ENCODE measurements at regions of chr9 and their contacts with region 1.

Region 1: DNA sequence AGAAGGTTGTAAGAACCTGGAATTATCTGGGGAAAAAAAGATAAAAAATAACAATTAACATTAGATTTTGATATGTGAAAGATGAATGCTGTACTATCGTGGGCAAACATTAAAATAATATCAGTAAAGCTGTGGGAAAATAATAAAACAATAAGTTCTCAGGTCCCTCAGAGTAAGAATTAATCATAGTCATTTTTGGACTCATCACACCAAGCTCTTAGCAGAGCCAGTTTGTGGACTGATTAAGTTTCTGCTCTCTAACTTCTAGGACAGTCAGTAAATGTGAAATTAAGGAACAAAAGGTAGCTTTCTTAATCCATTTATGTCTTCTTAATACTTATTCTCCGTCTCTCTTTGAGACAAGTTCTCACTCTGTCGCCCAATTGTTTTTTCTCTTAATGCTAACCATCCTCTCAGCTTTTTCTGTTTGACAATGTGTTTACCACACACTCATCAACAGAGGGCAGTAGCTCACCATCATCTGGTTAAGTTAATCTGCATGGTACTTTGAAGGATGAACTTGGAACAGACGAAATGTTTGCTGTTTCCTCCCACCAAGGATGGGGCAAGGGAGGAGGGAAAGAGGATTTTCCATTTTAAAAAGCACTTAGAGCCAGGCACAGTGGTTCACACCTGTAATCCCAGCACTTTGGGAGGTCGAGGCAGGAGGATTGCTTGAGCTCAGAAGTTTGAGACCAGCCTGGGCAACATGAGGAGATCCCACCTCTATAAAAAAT is 5.3 kb upstream of the ACO1 start:
- DNase-seq: no peak
- H3K4me3 ChIP-seq: no peak overlapping the region
- H3K27me3 ChIP-seq: no peaks in the 10 kb centered on the region; the same call in 1 of the 2 replicates
- CTCF ChIP-seq: peak; percentile 78

Region 2: GRCh38 chr9:32413424-32413823 is 34.3 kb after region 1 on chr9:
- CTCF ChIA-PET with region 1: interaction called, 10 read pairs
- POLR2A ChIA-PET with region 1: no interaction called
- DNase-seq: no peak
- H3K4me3 ChIP-seq: no peak overlapping the region
- H3K27me3 ChIP-seq: no peaks in the 10 kb centered on the region
- CTCF ChIP-seq: no peak

Region 3: GRCh38 chr9:32431940-32432555 is 52.9 kb after region 1 on chr9:
- CTCF ChIA-PET with region 1: interaction called, 171 read pairs
- POLR2A ChIA-PET with region 1: interaction called, 3 read pairs
- DNase-seq: no peak
- H3K4me3 ChIP-seq: no peak overlapping the region
- H3K27me3 ChIP-seq: no peaks in the 10 kb centered on the region
- CTCF ChIP-seq: peak; percentile 64

Region 4: GRCh38 chr9:32550562-32551433 is 171.6 kb after region 1 on chr9:
- CTCF ChIA-PET with region 1: interaction called, 22 read pairs
- POLR2A ChIA-PET with region 1: no interaction called
- DNase-seq: peak; percentile 54
- H3K4me3 ChIP-seq: peak overlapping the region; percentile 75
- H3K27me3 ChIP-seq: no peaks in the 10 kb centered on the region
- CTCF ChIP-seq: peak; percentile 25; the same call in 1 of the 2 replicates

Region 5: GRCh38 chr9:32566770-32567169 is 187.6 kb after region 1 on chr9:
- CTCF ChIA-PET with region 1: interaction called, 492 read pairs
- POLR2A ChIA-PET with region 1: interaction called, 3 read pairs
- DNase-seq: no peak
- H3K4me3 ChIP-seq: no peak overlapping the region
- H3K27me3 ChIP-seq: no peaks in the 10 kb centered on the region
- CTCF ChIP-seq: no peak

Region 6: DNA sequence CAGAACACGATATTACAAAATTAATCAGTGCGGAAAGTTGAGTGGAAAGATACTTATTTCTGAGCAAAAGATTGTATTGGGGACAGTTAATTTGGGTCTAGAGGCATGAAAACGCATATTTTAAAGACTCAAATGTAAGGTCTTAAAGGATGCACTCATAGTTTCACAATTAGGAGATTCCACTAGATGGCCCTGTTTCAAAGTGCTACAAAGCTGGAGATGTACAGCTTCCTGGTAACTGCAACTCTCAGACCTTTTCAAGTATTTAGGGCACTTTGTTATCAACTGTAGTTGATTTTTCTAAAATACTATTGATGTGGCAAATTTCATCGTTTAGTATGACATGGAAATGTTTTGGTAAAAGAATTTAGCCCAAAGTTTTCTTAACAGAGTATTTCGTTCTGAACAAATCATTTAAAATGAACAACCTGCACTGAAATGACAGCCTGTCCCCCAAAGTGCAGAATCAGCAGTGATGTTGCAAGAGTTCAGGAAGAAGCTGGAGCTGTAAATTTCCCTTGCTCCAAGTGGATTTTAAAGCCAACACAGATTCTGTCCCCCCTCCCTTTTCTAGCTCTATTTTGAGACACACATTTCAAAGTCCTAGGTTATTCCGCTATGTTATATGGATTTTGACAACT is 210.0 kb after region 1 on chr9:
- CTCF ChIA-PET with region 1: interaction called, 492 read pairs
- POLR2A ChIA-PET with region 1: no interaction called
- DNase-seq: no peak
- H3K4me3 ChIP-seq: no peak overlapping the region
- H3K27me3 ChIP-seq: peaks cover 1% of the 10 kb centered on the region; the same call in 1 of the 2 replicates
- CTCF ChIP-seq: peak; percentile 60